ENCODE measurements at regions of chr17 and their contacts with region 1.

Region 1: GRCh38 chr17:4881761-4882555 is 17.4 kb upstream of the C17orf107 start:
- DNase-seq: peak; percentile 81
- CTCF ChIP-seq: peak; percentile 56

Region 2: GRCh38 chr17:4709794-4710692 is 171.9 kb before region 1 on chr17 and contains the start of gene ARRB2:
- in situ Hi-C with region 1: loop called (anchors 10 kb)
- DNase-seq: peak; percentile 98
- CTCF ChIP-seq: peak; percentile 62

Region 3: GRCh38 chr17:4789901-4790704 is 91.9 kb before region 1 on chr17:
- in situ Hi-C with region 1: loop called (anchors 10 kb)
- DNase-seq: peak; percentile 95
- CTCF ChIP-seq: peak; percentile 85

Measured in GM13976 (cell line).